Mammary epithelial cell (primary cell): ENCODE measurements at regions of chr1 and their contacts with region 1.

Region 1: GRCh38 chr1:23422241-23423030 is 2.1 kb downstream of the TCEA3 start:
- DNase-seq: peak; percentile 31
- H3K4me3 ChIP-seq: no peak overlapping the region
- H3K27ac ChIP-seq: no peak overlapping the region
- H3K4me1 ChIP-seq: peaks cover 20% of the 10 kb centered on the region
- H3K27me3 ChIP-seq: peaks cover 6% of the 10 kb centered on the region
- CTCF ChIP-seq: no peak

Region 2: GRCh38 chr1:23303524-23303923 is 118.9 kb before region 1 on chr1:
- CTCF ChIA-PET with region 1: no interaction called
- dilution Hi-C with region 1: loop called (anchors 10 kb)
- in situ Hi-C with region 1: no loop called
- intact Hi-C with region 1: no loop called
- DNase-seq: no peak
- H3K4me3 ChIP-seq: no peak overlapping the region
- H3K27ac ChIP-seq: no peak overlapping the region
- H3K4me1 ChIP-seq: no peaks in the 10 kb centered on the region
- H3K27me3 ChIP-seq: no peaks in the 10 kb centered on the region
- CTCF ChIP-seq: no peak

Region 3: GRCh38 chr1:23384302-23385058 is 38.0 kb before region 1 on chr1:
- CTCF ChIA-PET with region 1: no interaction called
- dilution Hi-C with region 1: loop called (anchors 5 kb)
- in situ Hi-C with region 1: no loop called
- intact Hi-C with region 1: no loop called
- DNase-seq: peak; percentile 77
- H3K4me3 ChIP-seq: no peak overlapping the region
- H3K27ac ChIP-seq: peak overlapping the region; percentile 19
- H3K4me1 ChIP-seq: peaks cover 27% of the 10 kb centered on the region
- H3K27me3 ChIP-seq: no peaks in the 10 kb centered on the region
- CTCF ChIP-seq: no peak

Region 4: GRCh38 chr1:23496490-23497181 is 74.2 kb after region 1 on chr1:
- CTCF ChIA-PET with region 1: no interaction called
- dilution Hi-C with region 1: loop called (anchors 5 kb)
- in situ Hi-C with region 1: no loop called
- intact Hi-C with region 1: no loop called
- DNase-seq: no peak
- H3K4me3 ChIP-seq: no peak overlapping the region
- H3K27ac ChIP-seq: no peak overlapping the region
- H3K4me1 ChIP-seq: no peaks in the 10 kb centered on the region
- H3K27me3 ChIP-seq: no peaks in the 10 kb centered on the region
- CTCF ChIP-seq: no peak

Region 5: DNA sequence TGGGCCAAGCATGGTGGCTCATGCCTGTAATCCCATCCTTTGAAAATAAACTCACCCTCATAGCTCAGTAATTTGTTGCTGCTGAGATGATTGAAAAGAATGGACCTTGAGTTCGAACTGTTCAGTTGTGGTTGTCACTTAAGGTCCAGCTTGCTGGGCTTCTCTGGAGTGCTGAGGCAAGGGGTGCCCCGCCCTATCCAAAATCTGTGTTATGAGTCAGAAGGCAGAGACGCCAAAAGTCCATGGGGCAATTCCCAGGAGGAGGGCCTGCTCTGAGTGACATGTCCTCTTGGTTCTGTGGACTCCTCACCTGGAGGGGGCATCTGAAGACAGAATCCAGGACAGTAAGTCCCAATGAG is 624.6 kb after region 1 on chr1:
- CTCF ChIA-PET with region 1: interaction called, 10 read pairs
- dilution Hi-C with region 1: no loop called
- in situ Hi-C with region 1: no loop called
- intact Hi-C with region 1: no loop called
- DNase-seq: peak; percentile 67
- H3K4me3 ChIP-seq: no peak overlapping the region
- H3K27ac ChIP-seq: peak overlapping the region; percentile 16
- H3K4me1 ChIP-seq: peaks cover 21% of the 10 kb centered on the region
- H3K27me3 ChIP-seq: no peaks in the 10 kb centered on the region
- CTCF ChIP-seq: no peak